Activated CD4-positive, alpha-beta T cell treated with anti-CD3 and anti-CD28 coated beads, Interleukin-2, amount 10 ng/mL, durations not matched to agents 24 days and 14 days (primary cell): ENCODE measurements at regions of chr7 and their contacts with region 1.

Region 1: DNA sequence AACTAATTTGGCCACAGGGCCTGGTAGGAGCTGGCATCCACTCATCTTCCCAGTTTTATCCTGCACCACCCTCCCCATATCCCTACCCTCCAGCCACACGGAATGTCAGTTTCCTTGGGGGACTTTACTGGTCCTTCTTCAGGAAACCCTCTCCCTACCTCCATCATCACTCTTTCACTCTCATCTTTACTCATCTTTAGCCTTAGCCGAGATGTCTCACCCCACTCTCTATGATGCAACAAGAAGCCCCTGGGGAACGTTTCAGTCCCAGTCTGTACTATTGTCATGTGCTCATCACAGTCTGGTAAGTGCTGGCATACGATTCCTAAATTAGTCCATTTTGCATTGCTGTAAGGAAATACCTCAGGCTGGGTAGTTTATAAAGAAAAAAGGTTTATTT is 34.9 kb upstream of the TMEM248 start:
- DNase-seq: no peak
- H3K4me3 Mint-ChIP-seq: no peak overlapping the region
- H3K27ac Mint-ChIP-seq: peak overlapping the region; percentile 42
- H3K4me1 Mint-ChIP-seq: peaks cover 14% of the 10 kb centered on the region
- H3K27me3 Mint-ChIP-seq: no peaks in the 10 kb centered on the region

Region 2: DNA sequence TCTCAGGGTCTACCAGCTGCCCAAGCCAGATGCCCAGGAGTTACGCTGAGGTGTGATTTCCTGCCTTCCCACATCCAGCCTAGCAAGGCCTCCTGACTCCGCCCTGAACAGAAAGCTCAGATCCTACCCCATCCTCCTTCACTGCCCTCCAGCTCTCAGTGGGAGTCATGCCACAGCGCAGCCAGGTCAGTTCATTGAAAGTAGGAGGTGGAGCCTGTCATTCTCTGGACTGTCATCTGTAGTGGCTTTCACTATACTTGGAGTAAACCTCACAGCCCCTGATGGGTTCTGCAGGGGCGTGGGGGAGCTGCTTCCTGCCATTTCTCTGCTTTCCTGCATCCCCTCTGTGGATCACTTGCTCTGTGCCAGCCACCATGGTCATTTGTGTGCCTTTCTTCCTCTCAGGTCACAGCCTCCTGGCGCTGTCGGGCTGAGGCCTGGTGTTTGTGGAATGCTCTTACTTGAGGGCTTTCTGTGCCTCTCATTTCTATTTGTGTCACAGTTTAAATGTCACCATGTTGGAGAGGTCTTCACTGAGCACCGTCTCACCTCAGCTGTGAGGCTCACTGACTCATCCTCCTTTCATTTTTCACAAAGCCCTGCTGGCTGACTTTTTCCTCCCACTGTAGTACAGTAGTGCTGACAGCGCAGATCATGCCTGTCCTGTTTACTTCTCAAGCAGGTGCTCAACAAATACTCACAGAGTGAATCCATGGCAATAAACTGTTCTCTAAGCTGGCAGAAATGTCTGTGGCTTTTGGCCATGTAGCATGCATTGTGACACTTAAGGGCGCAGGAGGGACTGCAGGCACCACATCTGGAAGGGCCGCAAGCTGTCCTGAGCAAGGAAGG is 26.1 kb before region 1 on chr7:
- intact Hi-C with region 1: loop called (anchors 2 kb)
- DNase-seq: peak; percentile 76
- H3K4me3 Mint-ChIP-seq: peak overlapping the region; percentile 85
- H3K27ac Mint-ChIP-seq: peak overlapping the region; percentile 100
- H3K4me1 Mint-ChIP-seq: peaks cover 18% of the 10 kb centered on the region
- H3K27me3 Mint-ChIP-seq: no peaks in the 10 kb centered on the region

Region 3: GRCh38 chr7:66869660-66870450 is 16.3 kb before region 1 on chr7:
- intact Hi-C with region 1: loop called (anchors 1 kb)
- DNase-seq: no peak
- H3K4me3 Mint-ChIP-seq: no peak overlapping the region
- H3K27ac Mint-ChIP-seq: peak overlapping the region; percentile 68
- H3K4me1 Mint-ChIP-seq: no peaks in the 10 kb centered on the region
- H3K27me3 Mint-ChIP-seq: no peaks in the 10 kb centered on the region